ENCODE measurements at regions of chr10 and their contacts with region 1.

Region 1: DNA sequence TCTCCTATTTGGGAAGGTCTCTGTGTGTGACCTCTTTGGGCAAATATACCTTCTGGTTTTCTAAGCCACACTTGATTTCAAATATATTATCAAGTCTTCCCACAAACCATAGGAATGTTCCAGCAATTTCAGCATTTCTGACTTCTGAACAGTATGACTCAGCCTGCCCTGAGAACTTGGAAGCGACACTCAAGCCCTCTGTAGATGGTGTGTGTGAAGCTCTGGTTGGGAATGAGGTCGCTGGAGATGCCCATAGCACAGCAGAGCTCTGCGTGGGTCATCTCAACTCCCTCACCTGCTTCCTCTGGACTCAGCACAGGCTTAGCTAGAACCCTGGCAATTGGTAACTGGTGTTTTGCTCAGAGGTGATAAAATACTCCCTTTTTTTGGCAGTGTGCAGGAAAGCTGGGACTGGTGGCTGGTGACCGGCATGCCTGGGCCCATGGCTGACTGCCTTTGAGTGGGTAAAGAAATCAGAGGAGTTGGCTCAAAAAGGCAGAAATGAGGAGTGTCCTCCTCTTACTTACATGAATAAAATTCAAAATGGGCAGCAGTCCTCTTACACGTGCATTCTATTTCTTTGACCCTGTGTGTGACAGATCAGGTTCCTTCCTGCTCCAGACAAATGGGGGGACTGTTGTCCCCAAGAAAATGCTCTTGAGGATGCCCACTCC is 87.5 kb upstream of the NRP1 start:
- DNase-seq: peak; percentile 93
- ATAC-seq: peak; percentile 99
- H3K4me3 ChIP-seq: no peak overlapping the region
- H3K27ac ChIP-seq: no peak overlapping the region
- H3K4me1 ChIP-seq: peaks cover 7% of the 10 kb centered on the region
- H3K27me3 ChIP-seq: no peaks in the 10 kb centered on the region
- CTCF ChIP-seq: no peak

Region 2: GRCh38 chr10:33095867-33096815 is 325.8 kb before region 1 on chr10:
- CTCF ChIA-PET with region 1: no interaction called
- POLR2A ChIA-PET with region 1: no interaction called
- intact Hi-C with region 1: no loop called
- DNase-seq: no peak
- ATAC-seq: no peak
- H3K4me3 ChIP-seq: no peak overlapping the region
- H3K27ac ChIP-seq: no peak overlapping the region
- H3K4me1 ChIP-seq: no peaks in the 10 kb centered on the region
- H3K27me3 ChIP-seq: no peaks in the 10 kb centered on the region
- CTCF ChIP-seq: no peak

Region 3: DNA sequence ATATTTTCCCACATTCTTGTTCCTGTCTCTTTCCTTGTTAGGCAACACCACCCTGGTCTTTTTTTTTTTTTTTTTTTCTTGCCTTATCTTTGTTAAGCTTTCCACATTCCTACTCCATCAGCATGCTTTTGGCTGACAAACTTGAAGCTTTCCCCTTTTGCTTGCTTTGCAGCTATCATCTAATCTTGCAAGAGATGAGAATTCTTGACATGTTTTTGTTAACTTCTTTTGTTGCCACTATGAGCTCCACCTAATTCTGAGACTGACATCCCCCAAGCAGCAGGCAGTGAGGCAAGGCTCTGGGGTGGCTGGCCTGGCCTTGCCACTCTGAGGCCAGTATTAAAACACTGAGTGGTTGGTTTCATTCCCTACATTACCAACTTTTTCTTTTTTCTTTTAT is 35.0 kb before region 1 on chr10:
- CTCF ChIA-PET with region 1: no interaction called
- POLR2A ChIA-PET with region 1: interaction called, 12 read pairs
- intact Hi-C with region 1: no loop called
- DNase-seq: no peak
- ATAC-seq: no peak
- H3K4me3 ChIP-seq: no peak overlapping the region
- H3K27ac ChIP-seq: no peak overlapping the region
- H3K4me1 ChIP-seq: peaks cover 9% of the 10 kb centered on the region
- H3K27me3 ChIP-seq: no peaks in the 10 kb centered on the region
- CTCF ChIP-seq: no peak

Region 4: DNA sequence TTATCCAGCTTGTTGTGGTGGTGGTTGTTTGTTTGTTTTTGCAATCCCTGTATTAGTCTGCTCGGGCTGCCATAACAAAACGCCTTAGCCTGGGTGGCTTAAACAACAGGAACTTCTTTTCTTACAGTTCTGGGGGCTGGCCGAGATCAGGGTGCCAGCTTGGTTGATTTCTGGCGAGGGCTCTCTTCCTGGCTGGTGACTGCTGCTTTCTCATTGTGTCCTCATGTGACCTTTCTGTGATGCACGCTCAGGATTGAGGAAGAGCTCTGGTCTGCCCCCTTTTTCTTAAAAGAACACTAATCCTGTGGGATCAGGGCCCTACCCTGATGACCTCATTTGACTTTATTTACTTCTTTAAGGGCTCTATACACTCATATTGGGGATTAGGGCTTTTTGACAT is 19.6 kb after region 1 on chr10:
- CTCF ChIA-PET with region 1: no interaction called
- POLR2A ChIA-PET with region 1: no interaction called
- intact Hi-C with region 1: no loop called
- DNase-seq: peak; percentile 42
- ATAC-seq: peak; percentile 20; the same call in 1 of the 2 replicates
- H3K4me3 ChIP-seq: no peak overlapping the region
- H3K27ac ChIP-seq: no peak overlapping the region
- H3K4me1 ChIP-seq: no peaks in the 10 kb centered on the region
- H3K27me3 ChIP-seq: no peaks in the 10 kb centered on the region
- CTCF ChIP-seq: no peak

Region 5: DNA sequence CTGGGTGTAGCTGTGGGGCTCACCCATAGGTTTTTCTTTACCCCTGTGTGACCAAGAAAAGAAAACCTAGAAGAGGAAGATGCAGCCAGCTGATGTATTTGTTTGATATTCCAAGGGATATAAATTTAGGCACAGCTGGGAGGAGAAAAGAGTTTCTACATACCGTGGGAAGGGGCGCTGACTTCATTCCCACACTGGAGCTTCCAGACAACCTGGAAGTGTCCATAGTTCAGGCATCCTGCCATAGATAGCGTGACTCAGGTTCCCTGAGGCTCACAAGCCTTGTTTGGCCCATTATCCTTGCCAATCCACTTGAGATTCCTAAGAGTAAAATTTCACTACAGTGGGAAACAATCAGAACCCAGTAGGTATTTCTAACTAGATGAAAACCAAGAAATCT is 284.3 kb after region 1 on chr10:
- CTCF ChIA-PET with region 1: no interaction called
- POLR2A ChIA-PET with region 1: no interaction called
- intact Hi-C with region 1: no loop called
- DNase-seq: peak; percentile 99
- ATAC-seq: peak; percentile 44
- H3K4me3 ChIP-seq: no peak overlapping the region
- H3K27ac ChIP-seq: peak overlapping the region; percentile 74
- H3K4me1 ChIP-seq: peaks cover 40% of the 10 kb centered on the region
- H3K27me3 ChIP-seq: no peaks in the 10 kb centered on the region
- CTCF ChIP-seq: no peak

Measured in PC-3 (cell line).